Calu3 (cell line): ENCODE measurements at regions of chr11 and their contacts with region 1.

Region 1: GRCh38 chr11:33996498-33997454 is 54.8 kb upstream of the CAPRIN1 start:
- DNase-seq: peak; percentile 84
- H3K4me3 Mint-ChIP-seq: peak overlapping the region; percentile 36
- H3K27ac Mint-ChIP-seq: no peak overlapping the region
- H3K4me1 Mint-ChIP-seq: peaks cover 10% of the 10 kb centered on the region
- H3K27me3 Mint-ChIP-seq: no peaks in the 10 kb centered on the region
- CTCF ChIP-seq: peak; percentile 73

Region 2: GRCh38 chr11:33747979-33748378 is 248.8 kb before region 1 on chr11:
- CTCF ChIA-PET with region 1: no interaction called
- intact Hi-C with region 1: no loop called
- DNase-seq: no peak
- H3K4me3 Mint-ChIP-seq: no peak overlapping the region
- H3K27ac Mint-ChIP-seq: no peak overlapping the region
- H3K4me1 Mint-ChIP-seq: no peaks in the 10 kb centered on the region
- H3K27me3 Mint-ChIP-seq: no peaks in the 10 kb centered on the region
- CTCF ChIP-seq: no peak

Region 3: GRCh38 chr11:33761471-33761870 is 235.3 kb before region 1 on chr11:
- CTCF ChIA-PET with region 1: no interaction called
- intact Hi-C with region 1: no loop called
- DNase-seq: no peak
- H3K4me3 Mint-ChIP-seq: no peak overlapping the region
- H3K27ac Mint-ChIP-seq: no peak overlapping the region
- H3K4me1 Mint-ChIP-seq: no peaks in the 10 kb centered on the region
- H3K27me3 Mint-ChIP-seq: no peaks in the 10 kb centered on the region
- CTCF ChIP-seq: no peak

Region 4: GRCh38 chr11:33952805-33953204 is 44.0 kb before region 1 on chr11:
- CTCF ChIA-PET with region 1: no interaction called
- intact Hi-C with region 1: no loop called
- DNase-seq: no peak
- H3K4me3 Mint-ChIP-seq: no peak overlapping the region
- H3K27ac Mint-ChIP-seq: no peak overlapping the region
- H3K4me1 Mint-ChIP-seq: no peaks in the 10 kb centered on the region
- H3K27me3 Mint-ChIP-seq: peaks cover 43% of the 10 kb centered on the region
- CTCF ChIP-seq: no peak

Region 5: DNA sequence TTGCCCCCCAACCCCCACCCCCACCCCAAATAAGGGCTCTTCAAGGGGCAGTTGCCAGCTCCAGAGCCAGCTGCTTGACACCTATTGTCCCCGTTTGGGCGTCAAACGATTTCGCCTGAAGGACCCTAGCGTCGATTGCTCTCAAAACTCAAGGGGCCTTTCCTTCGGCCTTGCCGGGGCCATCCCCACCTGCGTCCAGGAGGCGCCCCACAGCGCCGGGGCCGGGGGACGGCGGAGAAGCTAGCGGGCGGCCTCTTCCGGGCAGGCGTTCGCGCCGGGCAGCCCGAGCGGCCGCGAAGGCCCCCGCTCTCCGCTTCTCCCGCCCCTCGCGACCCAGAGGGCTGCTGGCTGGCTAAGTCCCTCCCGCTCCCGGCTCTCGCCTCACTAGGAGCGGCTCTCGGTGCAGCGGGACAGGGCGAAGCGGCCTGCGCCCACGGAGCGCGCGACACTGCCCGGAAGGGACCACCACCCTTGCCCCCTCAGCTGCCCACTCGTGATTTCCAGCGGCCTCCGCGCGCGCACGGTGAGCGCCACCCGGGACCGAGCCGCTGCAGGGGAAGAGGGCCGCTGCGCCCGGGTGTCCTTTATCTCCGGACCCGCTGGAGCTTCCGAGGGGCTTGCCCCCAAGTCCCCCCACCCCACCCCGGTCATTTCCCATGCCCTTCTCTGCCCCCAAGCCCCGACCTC is 54.7 kb after region 1 on chr11 and contains the start of gene CAPRIN1:
- CTCF ChIA-PET with region 1: interaction called, 3 read pairs
- intact Hi-C with region 1: loop called (anchors 5 kb)
- DNase-seq: peak; percentile 96
- H3K4me3 Mint-ChIP-seq: peak within 1 kb of the TSS; percentile 99
- H3K27ac Mint-ChIP-seq: peak within 1 kb of the TSS; percentile 97
- H3K4me1 Mint-ChIP-seq: peaks cover 14% of the 10 kb centered on the region
- H3K27me3 Mint-ChIP-seq: no peaks in the 10 kb centered on the region
- CTCF ChIP-seq: no peak
- total RNA-seq, gene CAPRIN1: 268 and 273 TPM in 2 replicates

Region 6: DNA sequence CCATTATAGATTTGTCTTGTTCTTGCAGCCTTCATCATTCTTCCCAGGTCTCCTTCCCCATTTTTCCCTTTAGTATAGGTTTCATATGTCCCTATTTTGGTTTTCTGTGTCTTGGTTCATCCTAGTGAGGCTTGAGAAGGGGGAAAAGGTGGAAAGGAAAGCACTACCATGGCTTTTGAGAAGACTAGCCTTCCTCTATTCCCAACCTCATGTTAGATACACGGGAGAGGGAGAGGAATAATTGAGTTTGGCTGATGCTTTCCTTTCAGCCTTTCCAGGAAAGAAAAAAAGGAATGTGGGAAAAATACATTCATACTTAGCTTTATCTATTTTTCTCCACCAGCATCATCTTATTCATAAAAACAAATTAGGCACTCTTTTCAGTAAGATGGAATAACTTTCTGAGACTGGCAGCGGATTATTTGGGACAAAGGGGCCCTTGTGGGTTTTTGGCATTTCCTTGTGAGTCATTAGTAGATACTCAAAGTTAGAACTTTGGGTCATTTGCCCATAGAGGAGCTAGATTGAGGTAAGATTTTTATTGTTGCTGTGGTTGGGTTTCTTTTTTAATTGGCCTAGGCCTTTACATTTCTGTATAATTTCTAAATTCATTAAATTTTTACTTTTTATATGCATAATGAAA is 78.5 kb after region 1 on chr11:
- CTCF ChIA-PET with region 1: interaction called, 5 read pairs
- intact Hi-C with region 1: loop called (anchors 2 kb)
- DNase-seq: peak; percentile 47
- H3K4me3 Mint-ChIP-seq: peak overlapping the region; percentile 13
- H3K27ac Mint-ChIP-seq: peak overlapping the region; percentile 53
- H3K4me1 Mint-ChIP-seq: peaks cover 34% of the 10 kb centered on the region
- H3K27me3 Mint-ChIP-seq: no peaks in the 10 kb centered on the region
- CTCF ChIP-seq: no peak

Region 7: GRCh38 chr11:34105957-34106504 is 109.3 kb after region 1 on chr11:
- CTCF ChIA-PET with region 1: interaction called, 4 read pairs
- intact Hi-C with region 1: loop called (anchors 2 kb)
- DNase-seq: no peak
- H3K4me3 Mint-ChIP-seq: peak overlapping the region; percentile 88
- H3K27ac Mint-ChIP-seq: peak overlapping the region; percentile 73
- H3K4me1 Mint-ChIP-seq: peaks cover 19% of the 10 kb centered on the region
- H3K27me3 Mint-ChIP-seq: no peaks in the 10 kb centered on the region
- CTCF ChIP-seq: no peak

Region 8: DNA sequence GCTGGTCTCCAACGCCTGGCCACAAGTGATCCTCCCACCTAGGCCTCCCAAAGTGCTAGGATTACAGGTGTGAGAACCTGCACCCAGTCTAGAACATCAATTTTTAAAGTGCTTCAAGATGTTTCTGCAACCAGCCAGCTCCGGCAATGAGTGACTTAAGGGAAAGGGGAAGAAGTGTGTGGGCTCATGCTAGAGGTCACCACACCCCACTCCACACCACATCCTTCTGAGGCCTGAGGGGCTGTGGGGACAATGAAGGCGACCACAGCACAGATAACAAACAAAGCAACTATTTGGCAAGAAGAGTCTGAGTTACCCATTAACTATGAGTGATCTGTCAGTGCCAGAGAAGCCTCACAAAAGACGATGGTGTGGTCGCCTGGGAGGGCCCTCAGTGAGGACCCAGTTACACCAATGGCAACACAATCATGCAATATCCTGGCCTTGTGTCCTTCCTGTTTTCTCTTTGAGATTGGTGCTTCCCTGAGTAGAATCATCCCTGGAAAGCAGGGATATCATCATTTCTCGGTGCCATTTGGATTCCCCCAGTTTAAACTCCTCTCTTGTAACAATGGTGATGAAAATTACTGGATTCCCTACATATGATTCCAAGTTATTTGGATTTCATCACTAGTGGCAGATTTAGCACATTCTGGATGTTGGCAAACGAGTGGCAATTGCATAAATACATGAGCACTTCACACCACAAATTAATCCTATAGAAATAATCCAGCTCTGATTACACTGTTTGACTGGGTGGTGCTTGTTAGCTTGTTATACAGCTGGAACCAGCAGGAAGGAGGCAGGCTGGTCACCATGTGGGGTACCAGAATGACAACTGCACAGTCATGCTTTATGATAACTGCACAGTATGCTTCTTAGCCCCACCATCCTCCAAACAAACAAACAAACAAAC is 342.6 kb after region 1 on chr11:
- CTCF ChIA-PET with region 1: no interaction called
- intact Hi-C with region 1: no loop called
- DNase-seq: peak; percentile 16
- H3K4me3 Mint-ChIP-seq: no peak overlapping the region
- H3K27ac Mint-ChIP-seq: no peak overlapping the region
- H3K4me1 Mint-ChIP-seq: peaks cover 59% of the 10 kb centered on the region
- H3K27me3 Mint-ChIP-seq: no peaks in the 10 kb centered on the region
- CTCF ChIP-seq: no peak